ENCODE measurements at regions of chr1 and their contacts with region 1.

Region 1: DNA sequence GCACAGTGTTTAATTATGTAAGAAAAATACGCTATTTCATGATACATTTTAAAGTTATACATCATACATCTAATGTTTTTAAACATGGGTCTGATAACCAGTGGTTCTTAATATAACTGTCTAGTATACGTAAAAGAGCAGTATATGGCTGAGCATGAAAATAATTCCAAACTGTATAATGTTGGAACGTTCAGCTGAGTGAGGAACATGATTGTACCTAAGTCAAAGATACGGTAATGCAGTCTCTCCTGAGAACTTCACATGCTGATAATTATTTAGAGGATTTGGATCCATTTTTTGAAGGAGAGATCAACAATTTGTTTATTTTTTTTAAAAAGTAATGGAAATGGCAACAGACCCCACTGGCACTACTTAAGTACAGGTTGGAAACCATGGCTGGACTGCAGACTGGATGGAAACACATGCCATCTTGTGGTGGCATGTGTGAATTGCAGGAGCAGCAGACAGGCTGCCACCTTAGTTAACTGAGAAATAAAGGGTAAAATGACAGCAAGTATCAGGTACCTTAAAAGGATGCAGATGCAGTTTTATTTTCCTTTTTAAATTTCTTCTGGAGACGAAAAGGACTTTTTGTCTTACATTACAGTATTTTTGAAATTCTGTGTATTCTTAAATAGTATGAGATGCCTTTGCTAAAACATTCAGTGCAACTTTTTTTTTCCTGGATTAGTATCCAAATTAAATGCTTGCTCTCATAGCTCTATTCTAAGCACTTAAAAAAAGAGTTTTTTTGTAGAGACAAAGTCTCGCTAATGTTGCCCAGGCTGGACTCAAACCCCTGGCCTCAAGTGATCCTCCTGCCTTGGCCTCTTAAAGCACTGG is 73.8 kb downstream of the MTR start:
- DNase-seq: peak; percentile 83
- H3K4me3 Mint-ChIP-seq: no peak overlapping the region
- H3K27ac Mint-ChIP-seq: no peak overlapping the region
- H3K4me1 Mint-ChIP-seq: peaks cover 10% of the 10 kb centered on the region
- H3K27me3 Mint-ChIP-seq: no peaks in the 10 kb centered on the region

Region 2: DNA sequence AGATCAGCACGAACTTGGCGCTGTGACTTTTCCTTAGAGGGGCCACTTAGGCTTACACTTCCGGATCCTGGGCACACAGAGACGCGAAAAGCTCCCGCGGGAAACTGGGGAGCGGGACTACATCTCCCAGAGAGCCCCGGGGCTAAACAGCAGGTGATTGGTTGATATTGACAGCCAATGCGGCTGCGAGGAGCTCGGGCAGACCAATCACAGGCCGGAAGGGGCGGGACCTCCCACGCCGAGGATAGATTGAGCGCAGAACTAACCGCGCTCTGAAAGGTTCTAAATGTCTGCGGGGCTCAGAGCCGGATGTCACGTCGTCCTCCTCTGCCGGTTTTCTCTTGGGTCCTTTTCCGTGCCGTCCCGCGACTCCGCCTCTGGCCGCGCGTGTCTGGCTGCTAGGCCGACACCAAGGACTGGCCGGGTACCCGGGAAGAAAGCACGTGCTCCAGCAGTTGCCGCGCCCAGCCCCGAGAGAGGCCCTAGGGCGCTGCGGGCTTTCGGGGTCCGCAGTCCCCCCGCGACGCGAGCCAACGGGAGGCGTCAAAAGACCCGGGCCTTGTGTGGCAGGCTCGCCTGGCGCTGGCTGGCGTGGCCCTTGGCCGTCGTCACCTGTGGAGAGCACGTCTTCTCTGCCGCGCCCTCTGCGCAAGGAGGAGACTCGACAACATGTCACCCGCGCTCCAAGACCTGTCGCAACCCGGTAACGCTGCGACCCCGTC is 73.7 kb before region 1 on chr1 and contains the start of gene MTR:
- intact Hi-C with region 1: loop called (anchors 2 kb)
- DNase-seq: peak; percentile 99
- H3K4me3 Mint-ChIP-seq: peak within 1 kb of the TSS; percentile 92
- H3K27ac Mint-ChIP-seq: peak within 1 kb of the TSS; percentile 94
- H3K4me1 Mint-ChIP-seq: peaks cover 28% of the 10 kb centered on the region
- H3K27me3 Mint-ChIP-seq: peaks cover 9% of the 10 kb centered on the region
- total RNA-seq, gene MTR: 50.7 and 51.8 TPM in 2 replicates